Tibial artery (tissue), 4 donors: ENCODE measurements at regions of chr5 and their contacts with region 1.

Region 1: GRCh38 chr5:103041071-103041676 is 78.8 kb downstream of the GIN1 start:
- DNase-seq: no peak
- H3K4me3 ChIP-seq: no peak overlapping the region
- H3K27ac ChIP-seq: no peak overlapping the region
- H3K4me1 ChIP-seq: peaks cover 0 to 3% (median 1%) of the 10 kb centered on the region in 4 donors
- H3K27me3 ChIP-seq: no peaks in the 10 kb centered on the region
- CTCF ChIP-seq: peak; percentile 67 to 76

Region 2: GRCh38 chr5:102583276-102584124 is 457.7 kb before region 1 on chr5:
- intact Hi-C with region 1: loop called (anchors 5 kb)
- DNase-seq: no peak
- H3K4me3 ChIP-seq: no peak overlapping the region
- H3K27ac ChIP-seq: no peak overlapping the region
- H3K4me1 ChIP-seq: no peaks in the 10 kb centered on the region
- H3K27me3 ChIP-seq: no peaks in the 10 kb centered on the region
- CTCF ChIP-seq: peak; percentile 35 to 47

Region 3: DNA sequence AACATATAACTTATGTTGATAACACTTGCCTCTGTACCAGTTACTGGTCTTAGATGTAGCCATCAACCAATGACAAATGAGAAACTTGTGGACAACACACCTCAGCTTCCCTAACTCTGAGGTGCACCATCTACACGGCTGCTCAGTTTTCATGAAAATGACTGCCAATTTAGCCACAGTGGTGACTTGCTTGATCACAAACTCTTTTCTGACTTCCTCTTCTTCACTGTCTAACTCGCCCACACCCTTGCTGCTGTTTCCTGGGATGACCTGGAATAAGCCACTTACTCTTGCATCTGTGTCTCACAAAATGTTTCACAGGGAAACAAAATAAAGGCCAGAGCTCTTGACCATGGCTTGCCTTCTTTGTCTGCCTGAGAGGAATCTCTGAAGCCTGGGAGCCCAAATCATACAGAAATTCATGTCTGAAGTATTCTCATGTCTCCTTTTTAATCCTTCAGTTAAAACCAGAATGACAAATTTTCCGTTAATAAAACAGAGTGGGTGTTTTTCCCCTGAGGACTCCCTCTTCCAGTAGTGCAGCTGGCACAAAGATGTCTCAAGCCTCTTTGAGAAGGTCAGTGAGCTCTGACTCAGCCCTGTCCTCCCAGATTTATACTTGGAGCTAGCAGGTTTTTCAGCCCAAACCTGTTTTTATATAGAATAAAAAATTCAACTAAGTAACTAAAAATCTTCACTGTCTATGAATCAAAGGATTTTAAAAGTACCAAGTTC is 412.6 kb before region 1 on chr5:
- intact Hi-C with region 1: no loop called
- DNase-seq: no peak
- H3K4me3 ChIP-seq: no peak overlapping the region
- H3K27ac ChIP-seq: peak overlapping the region; percentile 48 to 58
- H3K4me1 ChIP-seq: peaks cover 0 to 40% (median 3%) of the 10 kb centered on the region in 4 donors
- H3K27me3 ChIP-seq: no peaks in the 10 kb centered on the region
- CTCF ChIP-seq: no peak

Region 4: DNA sequence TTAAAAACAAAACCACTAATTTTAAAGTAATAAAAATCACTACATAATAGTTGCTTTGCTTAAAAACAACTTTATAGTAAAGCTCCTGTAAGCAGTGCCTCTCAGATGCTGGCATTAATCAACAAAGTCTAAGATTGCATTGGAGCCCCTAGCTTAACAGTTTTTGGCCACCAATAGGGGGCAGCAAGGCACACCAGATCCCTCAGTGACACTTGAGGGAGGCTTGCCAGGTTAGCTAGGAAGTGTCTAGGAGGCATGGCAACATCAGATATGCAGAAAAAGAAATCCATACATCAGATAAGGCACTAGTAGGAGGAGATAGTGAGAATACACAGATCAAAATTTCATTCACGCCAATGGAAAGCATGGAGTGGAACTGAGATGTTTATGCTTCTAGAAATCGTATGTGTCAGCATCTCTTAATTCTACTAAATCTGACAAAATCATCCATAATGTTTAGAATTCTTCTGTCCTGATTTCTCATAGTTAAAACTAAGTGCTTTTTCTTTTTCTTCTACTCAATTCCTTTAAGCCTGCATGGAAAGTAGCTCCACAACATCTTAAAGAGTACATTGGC is 359.7 kb before region 1 on chr5:
- intact Hi-C with region 1: loop called (anchors 5 kb)
- DNase-seq: peak; percentile 72 to 73
- H3K4me3 ChIP-seq: no peak overlapping the region
- H3K27ac ChIP-seq: no peak overlapping the region
- H3K4me1 ChIP-seq: peaks cover 0 to 4% (median 0%) of the 10 kb centered on the region in 4 donors
- H3K27me3 ChIP-seq: no peaks in the 10 kb centered on the region
- CTCF ChIP-seq: peak; percentile 76 to 85

Region 5: DNA sequence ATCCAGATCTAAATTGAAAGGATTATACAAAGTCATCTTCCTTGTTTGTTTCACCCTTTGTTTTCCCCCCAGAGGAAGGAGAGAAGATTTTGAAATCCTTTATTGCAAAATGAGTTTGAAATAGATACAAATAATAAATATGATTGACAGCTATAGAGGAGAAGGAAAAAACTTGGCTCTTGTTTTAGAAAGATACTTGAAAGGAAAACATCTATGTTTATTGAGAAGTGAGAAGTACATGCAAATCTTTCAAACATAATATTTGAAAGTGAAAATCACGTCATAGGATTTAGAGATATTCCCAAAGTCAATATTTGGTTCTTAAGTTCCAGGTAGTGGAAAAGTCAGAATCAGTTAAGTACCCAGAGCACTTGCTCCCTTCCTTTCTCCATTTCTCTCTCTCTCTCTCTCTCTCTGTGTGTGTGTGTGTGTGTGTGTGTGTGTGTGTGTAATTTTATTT is 258.8 kb before region 1 on chr5:
- intact Hi-C with region 1: loop called (anchors 5 kb)
- DNase-seq: no peak
- H3K4me3 ChIP-seq: no peak overlapping the region
- H3K27ac ChIP-seq: peak overlapping the region; percentile 61 to 64
- H3K4me1 ChIP-seq: peaks cover 0 to 70% (median 23%) of the 10 kb centered on the region in 4 donors
- H3K27me3 ChIP-seq: no peaks in the 10 kb centered on the region
- CTCF ChIP-seq: no peak

Region 6: DNA sequence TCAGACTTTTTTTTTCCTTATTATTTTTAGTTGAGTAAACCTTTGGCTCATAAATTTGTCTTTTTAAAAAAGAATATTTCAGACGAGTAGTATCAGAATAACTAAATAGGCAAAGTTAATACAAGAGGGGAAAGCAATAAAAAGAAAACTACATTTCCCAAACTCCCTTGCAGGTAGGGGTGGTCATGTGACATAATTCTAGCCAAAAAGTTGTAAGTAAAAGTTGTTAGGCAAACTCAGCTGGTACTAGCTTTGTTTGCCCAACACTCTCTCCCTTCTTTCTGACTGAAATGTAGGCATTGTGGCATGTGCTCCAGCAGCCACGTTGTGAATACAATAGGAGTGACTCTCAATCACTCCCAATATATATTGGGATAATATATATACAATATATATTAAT is 57.8 kb after region 1 on chr5:
- intact Hi-C with region 1: no loop called
- DNase-seq: no peak
- H3K4me3 ChIP-seq: no peak overlapping the region
- H3K27ac ChIP-seq: no peak overlapping the region
- H3K4me1 ChIP-seq: peaks cover 0 to 29% (median 7%) of the 10 kb centered on the region in 4 donors
- H3K27me3 ChIP-seq: no peaks in the 10 kb centered on the region
- CTCF ChIP-seq: no peak